Gastrocnemius medialis (tissue), 4 donors: ENCODE measurements at regions of chr11 and their contacts with region 1.

Region 1: GRCh38 chr11:842370-843002 is at the starts of genes POLR2L and TSPAN4:
- DNase-seq: peak; percentile 84 to 88
- ATAC-seq: peak; percentile 75 to 79
- H3K4me3 ChIP-seq: peak within 1 kb of the TSS; percentile 83 to 97 (median 87)
- H3K27ac ChIP-seq: peak within 1 kb of the TSS; percentile 82 to 97 (median 86)
- H3K4me1 ChIP-seq: peaks cover 29 to 37% of the 10 kb centered on the region in 2 donors
- H3K27me3 ChIP-seq: no peaks in the 10 kb centered on the region
- CTCF ChIP-seq: peak in 2 of 5 experiments; percentile 52 to 57
- POLR2A ChIP-seq: peak; percentile 89 to 93
- total RNA-seq, gene POLR2L: 66.0 to 94.6 (median 81.2) TPM
- total RNA-seq, gene TSPAN4: 14.4 to 34.8 (median 21.5) TPM

Region 2: DNA sequence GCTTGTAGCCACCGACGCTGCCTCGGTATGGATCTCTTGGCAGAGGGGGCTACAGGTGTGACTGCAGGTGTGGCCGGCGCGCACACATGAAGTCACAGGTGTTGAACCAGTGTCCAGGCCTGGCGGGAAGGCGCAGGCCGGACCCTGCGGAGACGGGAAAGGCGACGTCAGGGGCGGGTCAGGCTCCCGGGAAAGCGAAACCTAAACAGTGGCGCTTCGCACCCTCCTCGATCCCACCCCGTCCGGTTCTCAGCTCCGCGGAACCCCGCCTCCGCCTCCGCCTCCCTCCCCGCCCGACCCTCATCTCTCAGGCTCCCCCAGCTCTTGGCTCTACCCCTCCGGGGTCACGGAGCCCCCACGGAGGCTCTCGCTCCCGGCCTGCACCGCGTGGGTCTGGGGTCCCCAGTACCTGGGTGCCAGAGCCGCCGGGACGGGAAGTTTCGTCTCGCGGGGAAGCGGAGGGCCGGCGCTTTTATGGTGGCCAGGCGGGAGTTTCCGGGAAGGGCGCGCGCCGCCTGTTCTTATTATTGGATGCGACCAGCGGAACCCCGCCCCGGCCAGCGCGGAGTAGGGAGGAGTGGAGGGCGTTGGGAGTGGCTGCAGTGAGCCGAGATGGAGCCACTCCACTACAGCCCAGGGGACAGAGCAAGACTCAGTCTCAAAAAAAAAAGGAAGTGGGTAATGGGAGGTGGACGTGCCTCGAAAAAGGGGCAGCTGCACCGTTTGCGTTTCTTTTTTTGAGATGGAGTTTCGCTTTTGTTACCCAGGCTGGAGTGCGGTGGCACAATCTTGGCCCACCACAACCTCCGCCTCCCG is 226.8 kb before region 1 on chr11 and contains the start of gene IRF7:
- in situ Hi-C with region 1: no loop called
- intact Hi-C with region 1: no loop called
- DNase-seq: peak; percentile 87 to 92
- ATAC-seq: peak; percentile 61 to 75
- H3K4me3 ChIP-seq: peak within 1 kb of the TSS; percentile 66 to 85 (median 77)
- H3K27ac ChIP-seq: peak within 1 kb of the TSS; percentile 91 to 94 (median 93)
- H3K4me1 ChIP-seq: peaks cover 40 to 43% of the 10 kb centered on the region in 2 donors
- H3K27me3 ChIP-seq: no peaks in the 10 kb centered on the region
- CTCF ChIP-seq: no peak
- POLR2A ChIP-seq: peak; percentile 84 to 92
- total RNA-seq, gene IRF7: 15.5 to 37.1 (median 26.3) TPM

Region 3: DNA sequence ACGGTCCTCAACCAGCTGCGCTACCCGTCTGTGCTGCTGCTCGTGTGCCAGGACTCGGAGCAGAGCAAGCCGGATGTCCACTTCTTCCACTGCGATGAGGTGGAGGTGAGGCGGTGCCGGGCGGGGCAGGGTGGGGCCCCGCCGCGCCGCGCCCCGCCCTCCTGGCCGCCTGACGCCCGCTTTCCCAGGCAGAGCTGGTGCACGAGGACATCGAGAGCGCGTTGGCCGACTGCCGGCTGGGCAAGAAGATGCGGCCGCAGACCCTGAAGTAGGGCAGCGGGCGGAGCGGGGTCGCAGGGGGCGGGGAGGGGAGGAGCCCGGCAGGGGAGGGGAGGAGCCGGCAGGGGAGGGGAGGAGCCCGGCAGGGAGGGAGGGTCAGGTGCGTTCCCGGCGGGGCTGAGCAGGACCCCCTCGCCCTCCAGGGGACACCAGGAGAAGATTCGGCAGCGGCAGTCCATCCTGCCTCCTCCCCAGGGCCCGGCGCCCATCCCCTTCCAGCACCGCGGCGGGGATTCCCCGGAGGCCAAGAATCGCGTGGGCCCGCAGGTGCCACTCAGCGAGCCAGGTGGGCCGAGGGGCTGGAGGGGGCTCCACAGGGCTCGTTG is 121.7 kb before region 1 on chr11:
- in situ Hi-C with region 1: no loop called
- intact Hi-C with region 1: no loop called
- DNase-seq: no peak
- ATAC-seq: peak in 1 of 2 donors; percentile 79
- H3K4me3 ChIP-seq: peak overlapping the region in 2 of 4 donors; percentile 14 to 51
- H3K27ac ChIP-seq: no peak overlapping the region
- H3K4me1 ChIP-seq: peaks cover 4 to 15% of the 10 kb centered on the region in 2 donors
- H3K27me3 ChIP-seq: peaks cover 48 to 65% (median 63%) of the 10 kb centered on the region in 3 donors
- CTCF ChIP-seq: no peak
- POLR2A ChIP-seq: no peak

Region 4: DNA sequence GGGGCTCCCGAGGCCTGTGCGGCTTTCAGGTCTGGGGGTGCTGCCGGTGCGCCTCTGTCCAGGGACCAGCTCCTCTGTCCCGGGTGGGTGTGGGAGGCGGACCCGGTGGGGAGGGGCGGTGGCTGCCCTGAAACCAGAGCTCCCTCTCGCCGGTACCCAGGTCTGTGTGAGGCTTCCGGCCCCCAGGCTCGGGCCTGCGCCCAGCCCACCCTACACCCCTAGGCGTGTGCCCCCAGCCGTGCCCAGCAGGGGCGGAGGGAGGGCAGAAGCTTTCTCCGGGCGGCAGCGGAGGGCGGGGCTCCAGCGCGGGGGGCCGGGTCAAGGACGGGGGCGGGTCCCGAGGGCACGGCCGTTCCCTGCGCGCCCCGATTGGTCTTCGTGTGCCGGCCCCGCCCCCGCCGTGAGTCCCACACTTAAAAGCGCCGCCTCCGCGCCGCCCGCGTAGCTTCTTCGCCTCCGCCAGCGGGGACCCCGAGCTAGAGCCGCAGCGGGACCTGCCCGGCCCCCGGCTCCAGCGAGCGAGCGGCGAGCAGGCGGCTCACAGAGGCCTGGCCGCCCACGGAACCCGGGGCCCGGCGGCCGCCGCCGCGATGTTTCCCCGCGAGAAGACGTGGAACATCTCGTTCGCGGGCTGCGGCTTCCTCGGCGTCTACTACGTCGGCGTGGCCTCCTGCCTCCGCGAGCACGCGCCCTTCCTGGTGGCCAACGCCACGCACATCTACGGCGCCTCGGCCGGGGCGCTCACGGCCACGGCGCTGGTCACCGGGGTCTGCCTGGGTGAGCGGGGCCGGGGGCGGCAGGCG is 23.2 kb before region 1 on chr11:
- in situ Hi-C with region 1: no loop called
- intact Hi-C with region 1: loop called (anchors 2 kb)
- DNase-seq: peak; percentile 90 to 93
- ATAC-seq: peak; percentile 61
- H3K4me3 ChIP-seq: peak overlapping the region; percentile 68 to 100 (median 82)
- H3K27ac ChIP-seq: peak overlapping the region; percentile 93 to 100 (median 98)
- H3K4me1 ChIP-seq: peaks cover 27 to 39% of the 10 kb centered on the region in 2 donors
- H3K27me3 ChIP-seq: no peaks in the 10 kb centered on the region
- CTCF ChIP-seq: peak in 4 of 5 experiments; percentile 29 to 61 (median 36)
- POLR2A ChIP-seq: peak; percentile 99

Region 5: DNA sequence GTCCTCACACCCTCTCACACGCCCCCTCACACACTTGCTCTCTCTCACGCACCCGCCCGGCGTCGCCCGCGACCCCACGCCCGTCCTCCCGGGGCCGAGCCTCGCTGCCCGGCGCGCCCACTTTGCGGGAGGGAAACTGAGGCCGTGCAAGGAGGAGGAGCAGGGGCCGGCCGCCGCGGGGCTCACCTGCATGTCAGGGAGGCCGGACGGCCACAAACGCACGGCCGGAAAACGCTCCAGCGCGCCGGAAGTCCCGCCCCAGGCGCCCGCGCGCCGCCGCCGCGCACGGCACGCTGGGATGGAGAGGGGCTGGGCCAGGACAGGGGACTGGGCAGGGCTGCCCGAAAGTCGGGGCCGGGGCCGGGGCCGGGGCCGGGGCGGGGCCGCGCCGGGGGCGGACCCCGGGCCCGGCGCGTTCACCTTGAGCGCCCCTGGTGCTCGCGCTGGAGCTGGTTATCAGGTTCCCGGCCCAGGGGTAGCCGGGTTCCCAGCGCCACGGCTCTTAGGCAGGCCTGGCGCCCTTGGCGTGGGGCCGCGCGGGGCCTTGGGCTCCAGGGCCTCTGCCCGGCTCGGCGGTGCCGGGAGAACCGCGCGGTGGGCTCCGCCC is 68.2 kb after region 1 on chr11 and contains the start of gene CHID1:
- in situ Hi-C with region 1: no loop called
- intact Hi-C with region 1: loop called (anchors 5 kb)
- DNase-seq: peak; percentile 73 to 84
- ATAC-seq: peak; percentile 93 to 94
- H3K4me3 ChIP-seq: peak within 1 kb of the TSS; percentile 82 to 98 (median 88)
- H3K27ac ChIP-seq: peak within 1 kb of the TSS; percentile 81 to 97 (median 91)
- H3K4me1 ChIP-seq: peaks cover 11 to 14% of the 10 kb centered on the region in 2 donors
- H3K27me3 ChIP-seq: no peaks in the 10 kb centered on the region
- CTCF ChIP-seq: peak in 2 of 5 experiments; percentile 20
- POLR2A ChIP-seq: peak; percentile 63
- total RNA-seq, gene CHID1: 23.3 to 43.2 (median 33.1) TPM

Region 6: GRCh38 chr11:1005928-1006327 is 163.4 kb after region 1 on chr11:
- in situ Hi-C with region 1: no loop called
- intact Hi-C with region 1: no loop called
- DNase-seq: peak in 1 of 2 donors; percentile 37
- ATAC-seq: no peak
- H3K4me3 ChIP-seq: no peak overlapping the region
- H3K27ac ChIP-seq: peak overlapping the region in 3 of 4 donors; percentile 59 to 74 (median 66)
- H3K4me1 ChIP-seq: peaks cover 8% of the 10 kb centered on the region in 2 donors
- H3K27me3 ChIP-seq: no peaks in the 10 kb centered on the region
- CTCF ChIP-seq: no peak
- POLR2A ChIP-seq: no peak

Region 7: GRCh38 chr11:1825039-1825740 is 982.7 kb after region 1 on chr11:
- in situ Hi-C with region 1: no loop called
- intact Hi-C with region 1: no loop called
- DNase-seq: no peak
- ATAC-seq: no peak
- H3K4me3 ChIP-seq: no peak overlapping the region
- H3K27ac ChIP-seq: no peak overlapping the region
- H3K4me1 ChIP-seq: no peaks in the 10 kb centered on the region
- H3K27me3 ChIP-seq: no peaks in the 10 kb centered on the region
- CTCF ChIP-seq: peak in 1 of 5 experiments; percentile 14
- POLR2A ChIP-seq: no peak